GM10248 (cell line): ENCODE measurements at regions of chr2 and their contacts with region 1.

Region 1: GRCh38 chr2:74334931-74335333 is 8.3 kb downstream of the SLC4A5 start:
- DNase-seq: peak; percentile 65
- CTCF ChIP-seq: peak; percentile 99

Region 2: DNA sequence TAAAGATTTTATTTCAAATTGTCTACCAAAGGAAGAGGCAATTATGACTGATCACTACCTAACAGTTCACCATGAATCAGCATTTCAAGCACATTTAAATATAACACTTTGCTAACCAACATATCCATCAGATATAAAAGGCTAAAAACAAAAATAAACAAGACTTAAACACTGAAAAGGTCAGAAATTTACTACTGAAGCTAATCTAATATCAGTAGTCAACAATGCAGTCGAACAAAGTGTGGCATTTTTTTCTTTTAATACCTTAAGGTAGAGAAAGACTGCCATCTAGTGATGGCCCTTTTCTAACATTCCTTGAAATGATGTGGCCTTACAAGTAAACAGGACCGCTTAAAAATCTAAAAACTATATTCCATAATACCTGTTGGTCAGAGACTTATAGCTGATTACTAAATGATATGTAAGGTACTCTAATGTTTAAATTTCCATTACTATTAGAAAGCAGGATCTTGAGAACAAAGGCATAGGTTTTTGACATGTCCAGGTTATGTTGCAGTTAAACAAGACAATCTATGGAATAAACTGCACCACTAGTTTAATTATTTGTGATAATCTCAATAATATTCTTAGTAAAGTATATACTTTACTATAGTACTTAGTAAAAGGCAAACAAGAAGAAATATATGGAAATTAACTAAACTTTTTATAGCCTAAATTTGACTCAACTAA is 1589.1 kb before region 1 on chr2:
- CTCF ChIA-PET with region 1: no interaction called
- POLR2A ChIA-PET with region 1: no interaction called
- DNase-seq: peak; percentile 12
- CTCF ChIP-seq: peak; percentile 47

Region 3: GRCh38 chr2:74250189-74250631 is 84.7 kb before region 1 on chr2:
- CTCF ChIA-PET with region 1: interaction called, 57 read pairs
- POLR2A ChIA-PET with region 1: no interaction called
- DNase-seq: peak; percentile 82
- CTCF ChIP-seq: peak; percentile 86

Region 4: DNA sequence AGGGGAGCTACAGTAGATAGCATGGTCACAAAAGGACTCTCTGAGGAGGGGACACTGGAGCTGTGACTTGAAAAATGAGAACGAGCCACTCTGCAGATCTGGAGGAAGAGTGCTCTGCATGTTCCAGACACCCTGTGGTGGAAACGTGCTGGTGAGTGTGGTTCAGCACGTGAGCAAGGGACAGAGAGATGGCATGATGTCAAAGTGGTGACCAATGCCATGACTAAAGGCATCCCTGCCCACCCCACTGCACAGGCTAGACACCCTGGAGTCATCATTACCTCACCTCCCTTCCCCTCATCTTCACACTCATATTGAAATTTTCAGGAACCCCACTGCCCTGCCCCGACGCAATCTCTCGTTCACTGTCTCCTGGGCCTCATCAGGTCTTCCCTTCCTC is 48.2 kb before region 1 on chr2:
- CTCF ChIA-PET with region 1: interaction called, 15 read pairs
- POLR2A ChIA-PET with region 1: no interaction called
- DNase-seq: no peak
- CTCF ChIP-seq: no peak

Region 5: GRCh38 chr2:74317701-74318301 is 17.1 kb before region 1 on chr2:
- CTCF ChIA-PET with region 1: interaction called, 75 read pairs
- POLR2A ChIA-PET with region 1: no interaction called
- DNase-seq: no peak
- CTCF ChIP-seq: no peak

Region 6: GRCh38 chr2:74361327-74361726 is 26.4 kb after region 1 on chr2:
- CTCF ChIA-PET with region 1: interaction called, 22 read pairs
- POLR2A ChIA-PET with region 1: no interaction called
- DNase-seq: no peak
- CTCF ChIP-seq: no peak